Natural killer cell (primary cell): ENCODE measurements at regions of chr1 and their contacts with region 1.

Region 1: GRCh38 chr1:64864018-64864940 is 102.1 kb downstream of the JAK1 start:
- DNase-seq: peak; percentile 72 to 87
- ATAC-seq: peak; percentile 79 to 96 (median 86)
- H3K4me3 ChIP-seq: no peak overlapping the region
- H3K4me3 Mint-ChIP-seq: peak overlapping the region; percentile 85
- H3K27ac ChIP-seq: peak overlapping the region; percentile 80
- H3K27ac Mint-ChIP-seq: peak overlapping the region; percentile 88 to 93
- H3K4me1 ChIP-seq: peaks cover 52% of the 10 kb centered on the region
- H3K4me1 Mint-ChIP-seq: peaks cover 73 to 85% of the 10 kb centered on the region in 2 donors
- H3K27me3 ChIP-seq: no peaks in the 10 kb centered on the region
- H3K27me3 Mint-ChIP-seq: no peaks in the 10 kb centered on the region
- CTCF ChIP-seq: no peak

Region 2: DNA sequence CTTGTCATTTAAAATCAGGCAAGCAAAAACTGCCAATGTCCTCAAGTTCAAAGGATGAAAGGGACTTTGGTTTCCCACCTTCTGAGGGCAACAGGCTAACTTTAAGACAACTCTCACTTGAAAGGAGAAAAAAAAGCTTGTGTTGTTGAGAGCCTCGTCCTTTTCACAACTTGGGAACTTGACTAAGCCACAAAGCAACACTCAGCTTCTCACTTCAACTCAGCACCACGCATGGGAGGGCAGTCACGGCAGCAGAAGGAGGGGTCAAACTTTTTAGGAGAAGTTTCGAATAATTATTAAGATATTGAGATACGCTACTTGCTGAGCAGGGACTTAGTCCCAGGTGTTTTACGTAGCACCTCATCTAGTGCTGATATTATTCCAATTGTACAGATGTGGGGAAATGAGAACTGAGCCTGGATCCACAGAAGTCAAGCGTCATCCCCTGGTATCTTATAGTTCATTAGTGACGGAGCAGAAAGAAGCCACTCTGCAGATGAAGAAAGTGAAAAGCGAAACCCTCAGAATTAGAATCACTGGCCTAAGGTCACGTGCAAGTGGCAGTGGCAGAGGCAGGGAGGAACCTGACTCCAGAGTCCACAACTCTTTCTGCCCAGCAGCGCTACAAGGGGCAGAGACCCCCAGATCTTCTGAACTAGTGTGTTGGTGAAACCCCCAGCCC is 18.4 kb after region 1 on chr1:
- intact Hi-C with region 1: loop called (anchors 1 kb)
- DNase-seq: peak; percentile 45 to 60
- ATAC-seq: peak; percentile 73 to 88 (median 85)
- H3K4me3 ChIP-seq: no peak overlapping the region
- H3K4me3 Mint-ChIP-seq: peak overlapping the region; percentile 75
- H3K27ac ChIP-seq: peak overlapping the region; percentile 80
- H3K27ac Mint-ChIP-seq: peak overlapping the region; percentile 79 to 93
- H3K4me1 ChIP-seq: peaks cover 70% of the 10 kb centered on the region
- H3K4me1 Mint-ChIP-seq: peaks cover 94 to 98% of the 10 kb centered on the region in 2 donors
- H3K27me3 ChIP-seq: no peaks in the 10 kb centered on the region
- H3K27me3 Mint-ChIP-seq: no peaks in the 10 kb centered on the region
- CTCF ChIP-seq: no peak

Region 3: GRCh38 chr1:64956733-64957441 is 92.6 kb after region 1 on chr1:
- intact Hi-C with region 1: loop called (anchors 1 kb)
- DNase-seq: peak in 1 of 2 donors; percentile 59
- ATAC-seq: peak; percentile 57 to 69 (median 61)
- H3K4me3 ChIP-seq: no peak overlapping the region
- H3K4me3 Mint-ChIP-seq: no peak overlapping the region
- H3K27ac ChIP-seq: peak overlapping the region; percentile 59
- H3K27ac Mint-ChIP-seq: no peak overlapping the region
- H3K4me1 ChIP-seq: peaks cover 66% of the 10 kb centered on the region
- H3K4me1 Mint-ChIP-seq: peaks cover 52 to 55% of the 10 kb centered on the region in 2 donors
- H3K27me3 ChIP-seq: no peaks in the 10 kb centered on the region
- H3K27me3 Mint-ChIP-seq: no peaks in the 10 kb centered on the region
- CTCF ChIP-seq: no peak

Region 4: DNA sequence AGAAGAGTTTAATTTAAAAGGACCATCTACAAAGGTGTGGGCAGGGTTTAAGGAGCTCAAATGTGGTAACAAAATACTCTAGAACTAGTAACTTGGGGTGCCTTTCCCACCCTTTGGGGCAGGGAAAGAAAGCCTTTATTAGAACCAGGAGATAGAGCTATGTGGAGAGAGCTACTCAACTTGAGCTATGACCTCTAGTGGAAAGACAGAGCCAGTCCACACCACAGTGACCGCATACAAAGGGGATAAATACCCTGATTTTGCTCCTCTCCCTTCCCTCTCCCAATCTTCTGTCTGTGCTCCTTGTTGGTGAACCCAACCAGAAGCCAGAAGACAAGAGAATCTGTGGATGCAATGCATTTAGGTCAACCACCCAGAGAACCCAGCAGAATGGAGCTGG is 156.5 kb after region 1 on chr1:
- intact Hi-C with region 1: loop called (anchors 5 kb)
- DNase-seq: peak in 1 of 2 donors; percentile 13
- ATAC-seq: peak in 2 of 3 donors; percentile 55 to 77
- H3K4me3 ChIP-seq: no peak overlapping the region
- H3K4me3 Mint-ChIP-seq: no peak overlapping the region
- H3K27ac ChIP-seq: no peak overlapping the region
- H3K27ac Mint-ChIP-seq: peak overlapping the region; percentile 16 to 18
- H3K4me1 ChIP-seq: no peaks in the 10 kb centered on the region
- H3K4me1 Mint-ChIP-seq: peaks cover 13 to 17% of the 10 kb centered on the region in 2 donors
- H3K27me3 ChIP-seq: no peaks in the 10 kb centered on the region
- H3K27me3 Mint-ChIP-seq: no peaks in the 10 kb centered on the region
- CTCF ChIP-seq: no peak

Region 5: DNA sequence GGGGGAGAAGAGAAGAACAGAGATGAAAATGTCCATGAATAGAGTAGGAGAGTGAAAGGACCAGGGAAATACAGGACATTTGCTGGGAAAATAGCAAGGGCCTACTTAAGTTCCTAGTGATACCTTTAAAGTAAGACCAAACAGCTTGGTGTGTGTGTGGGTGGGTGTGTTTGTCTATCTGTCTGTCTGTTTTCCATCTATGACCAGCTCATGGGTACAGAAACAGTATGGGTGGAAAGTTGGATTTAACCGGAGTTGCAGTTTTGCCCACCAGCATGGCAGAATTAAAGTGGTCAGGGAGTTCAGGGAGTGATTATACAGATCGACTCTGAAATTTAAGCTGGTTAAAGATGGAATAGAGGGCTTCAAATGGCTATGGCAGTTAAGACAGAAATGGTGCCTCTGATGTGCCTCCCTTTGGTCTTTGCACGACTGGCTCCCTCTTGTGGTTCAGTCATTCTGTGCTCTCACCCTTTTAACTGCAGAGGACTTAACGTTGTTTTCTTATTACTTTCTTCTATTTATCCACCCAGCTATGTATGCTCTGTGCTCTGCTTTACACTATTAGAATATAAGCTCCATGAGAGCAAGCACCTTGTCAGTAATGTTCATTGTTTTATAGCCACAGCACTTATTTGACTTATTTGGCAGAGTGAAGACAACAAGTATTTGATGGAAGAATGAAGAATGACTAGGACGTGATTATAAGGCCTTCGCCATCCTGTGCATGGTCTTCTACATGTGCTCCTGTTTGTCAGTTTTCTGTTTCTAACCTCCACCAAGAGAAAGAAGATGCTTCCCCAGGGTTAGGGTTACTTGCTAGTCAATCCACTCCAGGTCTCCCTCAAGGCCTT is 211.1 kb after region 1 on chr1:
- intact Hi-C with region 1: loop called (anchors 1 kb)
- DNase-seq: peak; percentile 45 to 89
- ATAC-seq: peak; percentile 91 to 99 (median 99)
- H3K4me3 ChIP-seq: no peak overlapping the region
- H3K4me3 Mint-ChIP-seq: no peak overlapping the region
- H3K27ac ChIP-seq: no peak overlapping the region
- H3K27ac Mint-ChIP-seq: no peak overlapping the region
- H3K4me1 ChIP-seq: no peaks in the 10 kb centered on the region
- H3K4me1 Mint-ChIP-seq: peaks cover 6 to 19% of the 10 kb centered on the region in 2 donors
- H3K27me3 ChIP-seq: no peaks in the 10 kb centered on the region
- H3K27me3 Mint-ChIP-seq: peaks cover 8 to 10% of the 10 kb centered on the region in 2 donors
- CTCF ChIP-seq: peak; percentile 76